K562 (cell line): ENCODE measurements at regions of chr11 and their contacts with region 1.

Region 1: DNA sequence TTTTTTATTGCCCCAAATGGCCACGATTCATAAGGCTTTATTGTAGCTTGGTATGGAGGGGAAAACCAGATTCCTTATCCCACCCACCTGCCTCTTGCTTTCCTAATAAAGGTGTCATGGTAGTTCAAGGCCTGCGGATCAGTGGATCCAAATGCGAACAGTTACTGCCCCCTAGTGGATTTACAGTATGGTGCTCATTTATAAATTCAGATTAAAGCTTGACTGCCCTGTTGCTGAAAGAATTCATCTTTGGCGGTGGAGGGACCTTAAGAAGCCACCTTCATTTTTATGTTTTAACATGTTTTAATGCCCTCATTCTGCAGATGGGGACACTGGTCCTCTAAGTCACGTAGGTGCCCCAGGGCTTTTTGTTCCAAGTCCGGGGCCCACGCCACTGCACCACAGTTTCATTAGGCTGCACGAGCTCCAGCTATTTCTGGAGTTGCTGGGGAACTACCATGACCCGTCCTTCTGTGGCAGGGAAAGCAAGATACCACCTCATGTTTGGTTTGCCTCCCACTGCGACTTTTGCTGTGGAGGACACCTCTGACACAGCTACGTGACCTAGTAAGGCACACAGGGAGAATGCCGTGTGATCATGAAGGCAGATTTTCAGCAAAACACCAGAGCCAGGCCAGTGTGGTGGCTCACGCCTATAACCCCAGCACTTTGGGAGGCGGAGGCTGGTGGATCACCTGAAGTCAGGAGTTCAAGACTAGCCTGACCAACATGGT is 15.6 kb upstream of the INCENP start:
- DNase-seq: peak; percentile 44 to 80 (median 48)
- ATAC-seq: peak; percentile 74
- H3K4me3 ChIP-seq: no peak overlapping the region
- H3K27ac ChIP-seq: no peak overlapping the region
- H3K4me1 ChIP-seq: peaks cover 7 to 16% of the 10 kb centered on the region in 2 experiments
- H3K27me3 ChIP-seq: no peaks in the 10 kb centered on the region
- CTCF ChIP-seq: peak; percentile 74 to 92 (median 79)
- EP300 ChIP-seq: no peak
- POLR2A ChIP-seq: no peak
- RAD21 ChIP-seq: peak; percentile 92

Region 2: DNA sequence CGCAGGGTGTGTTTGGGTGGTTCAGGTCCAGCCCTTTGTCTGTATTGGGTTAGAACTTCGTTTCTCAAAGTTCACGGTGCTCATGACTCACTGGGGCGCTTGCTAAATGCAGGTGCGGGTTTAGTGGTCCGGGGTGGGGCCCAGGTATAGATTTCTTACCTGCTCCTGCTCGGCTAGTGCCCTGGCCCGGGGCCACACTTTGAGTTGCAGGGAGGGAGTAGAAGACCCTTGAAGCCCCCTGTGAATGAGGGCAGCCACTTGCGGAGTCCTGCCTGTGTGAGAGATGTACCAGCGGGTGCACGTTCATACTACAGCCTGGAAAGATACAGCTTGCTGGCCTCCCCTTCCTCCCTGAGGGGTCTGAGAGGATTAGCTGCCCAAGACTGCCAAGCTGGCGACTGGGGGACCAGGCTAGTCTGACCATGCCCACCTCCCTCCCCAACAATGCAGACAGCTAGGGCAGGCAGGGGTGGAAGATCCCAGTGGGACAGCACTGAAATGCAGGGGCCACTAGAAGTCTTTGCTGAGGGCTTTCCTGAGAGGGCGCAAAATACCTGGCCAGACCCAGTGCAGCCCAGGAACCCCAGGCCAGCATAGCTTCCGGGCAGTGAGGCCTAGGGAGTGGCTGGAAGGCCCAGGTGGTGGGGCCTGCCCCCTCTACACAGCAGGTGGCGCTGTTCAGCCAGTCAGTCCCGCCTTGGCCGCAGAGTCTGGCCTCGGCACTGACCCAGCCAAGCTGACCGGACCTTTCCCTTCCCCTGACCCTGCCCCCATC is 360.8 kb before region 1 on chr11:
- CTCF ChIA-PET with region 1: no interaction called
- POLR2A ChIA-PET with region 1: no interaction called
- in situ Hi-C with region 1: no loop called
- intact Hi-C with region 1: loop called (anchors 5 kb)
- DNase-seq: peak; percentile 86 to 90 (median 88)
- ATAC-seq: peak; percentile 90
- H3K4me3 ChIP-seq: no peak overlapping the region
- H3K27ac ChIP-seq: no peak overlapping the region
- H3K4me1 ChIP-seq: peaks cover 43 to 84% of the 10 kb centered on the region in 2 experiments
- H3K27me3 ChIP-seq: no peaks in the 10 kb centered on the region
- CTCF ChIP-seq: peak; percentile 94 to 96 (median 95)
- EP300 ChIP-seq: no peak
- POLR2A ChIP-seq: no peak
- RAD21 ChIP-seq: peak; percentile 90 to 97

Region 3: DNA sequence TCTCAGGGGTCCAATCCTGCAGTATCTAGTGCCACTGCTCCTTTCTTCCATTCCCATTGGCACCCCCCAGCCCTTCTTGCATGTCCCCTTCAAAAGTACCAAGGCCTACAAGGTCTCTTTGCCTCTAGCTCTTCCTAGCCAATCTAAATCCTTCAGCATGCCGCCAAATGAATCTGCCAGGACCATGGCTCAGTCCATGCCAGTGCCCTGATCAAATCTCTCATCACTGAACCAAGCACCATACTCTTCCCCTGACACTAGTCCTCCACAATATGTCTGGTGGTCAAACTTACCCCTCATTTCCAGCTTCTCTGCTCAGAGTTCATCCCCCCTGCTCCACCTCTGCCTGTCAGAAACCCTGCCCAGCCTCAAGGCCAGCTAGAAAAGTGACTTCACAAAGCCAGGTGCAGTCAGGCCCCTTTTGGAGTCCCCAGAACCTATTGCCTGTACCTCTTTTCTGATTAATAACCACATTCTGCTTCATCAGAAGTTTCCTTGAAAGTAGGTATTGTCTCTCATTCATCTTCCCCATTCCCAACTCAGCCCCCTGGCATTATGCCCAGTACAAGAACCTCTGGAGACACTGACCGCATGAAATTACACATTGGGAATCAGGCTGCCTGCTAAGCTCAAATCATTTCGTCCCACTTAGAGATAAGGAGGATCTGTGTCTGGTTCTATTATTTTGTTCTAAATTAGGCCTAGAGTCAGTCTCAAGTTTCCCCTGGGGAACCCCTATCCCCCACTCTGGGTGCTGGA is 304.1 kb before region 1 on chr11:
- CTCF ChIA-PET with region 1: no interaction called
- POLR2A ChIA-PET with region 1: interaction called, 4 read pairs
- in situ Hi-C with region 1: loop called (anchors 5 kb)
- intact Hi-C with region 1: no loop called
- DNase-seq: no peak
- ATAC-seq: no peak
- H3K4me3 ChIP-seq: no peak overlapping the region
- H3K27ac ChIP-seq: no peak overlapping the region
- H3K4me1 ChIP-seq: peaks cover 37 to 53% of the 10 kb centered on the region in 2 experiments
- H3K27me3 ChIP-seq: no peaks in the 10 kb centered on the region
- CTCF ChIP-seq: no peak
- EP300 ChIP-seq: no peak
- POLR2A ChIP-seq: peak; percentile 58
- RAD21 ChIP-seq: no peak

Region 4: DNA sequence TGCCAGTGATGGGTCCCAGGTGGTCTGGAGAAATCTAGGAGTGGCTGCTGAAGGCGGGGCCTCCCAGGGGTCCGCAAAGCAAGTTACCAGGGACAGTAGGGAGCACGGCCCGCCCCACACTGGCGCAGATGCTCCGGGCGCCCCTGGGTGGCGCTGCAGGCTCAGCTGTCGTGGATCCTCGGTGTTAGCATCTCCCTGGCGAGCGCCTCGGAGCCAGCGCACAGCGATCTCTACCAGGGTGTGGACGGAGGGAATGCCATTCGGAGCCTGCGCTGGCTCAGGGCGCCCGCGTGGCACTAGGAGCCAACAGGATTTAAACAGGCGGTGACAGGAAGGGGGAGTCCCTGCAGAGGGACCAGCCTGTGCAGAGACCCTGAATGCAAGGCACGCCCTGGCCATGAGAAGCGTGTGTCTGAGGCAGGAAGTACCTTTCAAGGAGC is 237.0 kb before region 1 on chr11:
- CTCF ChIA-PET with region 1: interaction called, 13 read pairs
- POLR2A ChIA-PET with region 1: no interaction called
- in situ Hi-C with region 1: no loop called
- intact Hi-C with region 1: loop called (anchors 1 kb)
- DNase-seq: peak; percentile 88 to 93 (median 90)
- ATAC-seq: peak; percentile 94
- H3K4me3 ChIP-seq: no peak overlapping the region
- H3K27ac ChIP-seq: peak overlapping the region; percentile 85
- H3K4me1 ChIP-seq: peaks cover 43 to 76% of the 10 kb centered on the region in 2 experiments
- H3K27me3 ChIP-seq: no peaks in the 10 kb centered on the region
- CTCF ChIP-seq: peak; percentile 91 to 97 (median 96)
- EP300 ChIP-seq: no peak
- POLR2A ChIP-seq: no peak
- RAD21 ChIP-seq: peak; percentile 93 to 96

Region 5: GRCh38 chr11:61899146-61899841 is 208.9 kb before region 1 on chr11:
- CTCF ChIA-PET with region 1: interaction called, 51 read pairs
- POLR2A ChIA-PET with region 1: interaction called, 3 read pairs
- in situ Hi-C with region 1: loop called (anchors 5 kb)
- intact Hi-C with region 1: loop called (anchors 1 kb)
- DNase-seq: peak; percentile 89 to 94 (median 94)
- ATAC-seq: peak; percentile 93
- H3K4me3 ChIP-seq: no peak overlapping the region
- H3K27ac ChIP-seq: no peak overlapping the region
- H3K4me1 ChIP-seq: peaks cover 4 to 34% of the 10 kb centered on the region in 2 experiments; a peak in 4 of 5 replicates
- H3K27me3 ChIP-seq: no peaks in the 10 kb centered on the region
- CTCF ChIP-seq: peak; percentile 99
- EP300 ChIP-seq: no peak
- POLR2A ChIP-seq: no peak
- RAD21 ChIP-seq: peak; percentile 97 to 99

Region 6: GRCh38 chr11:62123669-62124185 is 15.5 kb after region 1 on chr11 and contains the start of gene INCENP:
- CTCF ChIA-PET with region 1: no interaction called
- POLR2A ChIA-PET with region 1: interaction called, 10 read pairs
- in situ Hi-C with region 1: no loop called
- intact Hi-C with region 1: no loop called
- DNase-seq: peak; percentile 95 to 99 (median 97)
- ATAC-seq: peak; percentile 99
- H3K4me3 ChIP-seq: peak within 1 kb of the TSS; percentile 85
- H3K27ac ChIP-seq: peak within 1 kb of the TSS; percentile 93
- H3K4me1 ChIP-seq: peaks cover 11 to 16% of the 10 kb centered on the region in 2 experiments; a peak in 4 of 5 replicates
- H3K27me3 ChIP-seq: no peaks in the 10 kb centered on the region
- CTCF ChIP-seq: no peak
- EP300 ChIP-seq: no peak
- POLR2A ChIP-seq: peak; percentile 80
- RAD21 ChIP-seq: no peak
- polyA plus RNA-seq, gene INCENP: 1.1 to 3.3 TPM